ENCODE measurements at regions of chr6 and their contacts with region 1.

Region 1: GRCh38 chr6:63476302-63476701 is 96.0 kb upstream of the LOC128125822 start:
- DNase-seq: no peak
- H3K4me3 ChIP-seq: no peak overlapping the region
- H3K27ac ChIP-seq: no peak overlapping the region
- H3K4me1 ChIP-seq: no peaks in the 10 kb centered on the region
- H3K27me3 ChIP-seq: no peaks in the 10 kb centered on the region
- CTCF ChIP-seq: no peak
- POLR2A ChIP-seq: no peak

Region 2: DNA sequence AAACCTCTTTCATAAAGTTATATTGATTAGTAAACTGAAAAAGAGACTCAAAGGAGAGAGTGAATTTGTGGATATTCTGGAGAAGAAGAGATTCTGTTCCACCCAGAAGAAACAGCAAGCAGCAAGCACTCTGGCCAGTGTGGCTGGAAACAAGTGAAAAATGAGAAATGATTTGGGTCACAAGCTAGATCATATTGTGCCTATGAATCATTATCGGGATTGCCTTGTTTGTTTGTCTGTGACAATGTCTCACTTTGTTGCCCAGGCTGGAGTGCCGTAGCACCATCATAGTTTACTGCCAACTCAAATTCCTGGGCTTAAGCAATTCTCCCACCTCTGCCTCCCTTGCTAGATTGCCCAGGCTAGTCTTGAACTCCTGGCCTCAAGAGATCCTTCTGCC is 10.6 kb before region 1 on chr6:
- intact Hi-C with region 1: loop called (anchors 2 kb)
- DNase-seq: no peak
- H3K4me3 ChIP-seq: no peak overlapping the region
- H3K27ac ChIP-seq: no peak overlapping the region
- H3K4me1 ChIP-seq: no peaks in the 10 kb centered on the region
- H3K27me3 ChIP-seq: no peaks in the 10 kb centered on the region
- CTCF ChIP-seq: no peak
- POLR2A ChIP-seq: no peak

Measured in vagina (tissue), 2 donors.